CD8-positive, alpha-beta memory T cell (primary cell): ENCODE measurements at regions of chr2 and their contacts with region 1.

Region 1: DNA sequence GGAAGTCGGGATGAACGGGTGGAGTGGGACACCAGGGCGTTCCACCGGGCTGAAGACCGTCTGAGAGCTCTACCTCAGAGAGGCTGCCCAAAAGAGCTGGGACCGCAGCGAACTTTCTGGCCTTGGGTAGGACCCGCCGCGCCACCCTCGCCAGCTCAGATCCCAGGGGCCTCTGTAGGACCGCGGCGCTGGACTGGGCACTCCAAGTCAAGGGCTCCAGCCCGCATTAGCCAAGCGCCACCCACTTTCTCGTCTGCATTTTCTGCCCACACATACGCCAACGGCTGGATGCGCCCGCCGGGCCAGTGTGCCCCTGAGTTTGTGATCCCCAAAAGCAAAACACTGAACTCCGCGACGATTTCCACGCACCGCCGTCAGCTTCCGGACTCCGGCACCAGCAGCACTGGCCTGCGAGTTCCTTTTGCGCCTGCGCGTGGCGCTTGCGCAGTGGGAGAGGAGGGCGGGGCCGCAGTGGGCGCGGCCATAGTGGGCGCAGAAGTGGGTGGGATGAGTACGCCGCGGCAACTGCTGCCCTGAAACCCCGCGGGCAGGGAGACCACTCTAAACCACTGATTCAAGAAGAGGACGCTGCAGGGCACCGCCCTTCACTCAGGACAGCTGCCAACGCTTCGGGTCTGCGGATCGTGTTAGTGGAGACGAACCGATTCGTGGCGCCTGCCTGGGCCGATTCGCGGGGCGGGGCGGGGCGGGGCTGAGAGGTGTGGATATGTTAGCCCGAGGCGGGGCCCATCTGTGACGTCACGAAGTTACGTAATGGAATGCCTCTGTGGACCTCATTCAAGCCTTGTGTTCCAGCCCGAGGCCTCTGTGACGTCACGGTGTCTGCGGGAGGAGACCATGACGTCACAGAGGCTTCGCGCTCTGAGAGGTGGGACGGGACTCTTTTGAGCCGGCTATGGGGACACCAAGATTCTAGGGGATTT is 10.5 kb downstream of the OSR1 start:
- DNase-seq: peak; percentile 92 to 99 (median 97)
- H3K4me3 ChIP-seq: peak overlapping the region; percentile 86
- H3K4me3 Mint-ChIP-seq: peak overlapping the region; percentile 92 to 98 (median 96)
- H3K27ac ChIP-seq: peak overlapping the region; percentile 90
- H3K27ac Mint-ChIP-seq: peak overlapping the region; percentile 97 to 99 (median 98)
- H3K4me1 ChIP-seq: peaks cover 44% of the 10 kb centered on the region
- H3K4me1 Mint-ChIP-seq: peaks cover 27 to 53% (median 30%) of the 10 kb centered on the region in 3 donors
- H3K27me3 ChIP-seq: peaks cover 41% of the 10 kb centered on the region
- H3K27me3 Mint-ChIP-seq: peaks cover 39 to 44% of the 10 kb centered on the region in 2 donors

Region 2: GRCh38 chr2:19358242-19359020 is 10.5 kb after region 1 on chr2 and contains the start of gene OSR1:
- CTCF ChIA-PET with region 1: interaction called, 28 read pairs
- POLR2A ChIA-PET with region 1: interaction called, 10 read pairs
- DNase-seq: no peak
- H3K4me3 ChIP-seq: no peak within 1 kb of the TSS
- H3K4me3 Mint-ChIP-seq: peak within 1 kb of the TSS; percentile 53 to 81 (median 72)
- H3K27ac ChIP-seq: no peak within 1 kb of the TSS
- H3K27ac Mint-ChIP-seq: peak within 1 kb of the TSS in 2 of 8 donors; percentile 33 to 65
- H3K4me1 ChIP-seq: peaks cover 46% of the 10 kb centered on the region
- H3K4me1 Mint-ChIP-seq: peaks cover 48 to 67% (median 48%) of the 10 kb centered on the region in 3 donors
- H3K27me3 ChIP-seq: peaks cover 70% of the 10 kb centered on the region
- H3K27me3 Mint-ChIP-seq: peaks cover 76% of the 10 kb centered on the region in 2 donors
- total RNA-seq, gene OSR1: not detected